ENCODE measurements at regions of chr13 and their contacts with region 1.

Region 1: GRCh38 chr13:44435142-44435982 is 61.7 kb downstream of the SERP2 start:
- DNase-seq: peak; percentile 87 to 90
- H3K4me3 ChIP-seq: peak overlapping the region; percentile 86
- H3K27ac ChIP-seq: peak overlapping the region; percentile 93
- H3K4me1 ChIP-seq: peaks cover 33% of the 10 kb centered on the region
- H3K27me3 ChIP-seq: no peaks in the 10 kb centered on the region
- CTCF ChIP-seq: no peak

Region 2: GRCh38 chr13:43831088-43831487 is 604.3 kb before region 1 on chr13:
- CTCF ChIA-PET with region 1: no interaction called
- POLR2A ChIA-PET with region 1: no interaction called
- intact Hi-C with region 1: no loop called
- DNase-seq: no peak
- H3K4me3 ChIP-seq: no peak overlapping the region
- H3K27ac ChIP-seq: peak overlapping the region; percentile 67
- H3K4me1 ChIP-seq: peaks cover 12% of the 10 kb centered on the region; the same call in 1 of the 2 replicates
- H3K27me3 ChIP-seq: no peaks in the 10 kb centered on the region
- CTCF ChIP-seq: no peak

Region 3: DNA sequence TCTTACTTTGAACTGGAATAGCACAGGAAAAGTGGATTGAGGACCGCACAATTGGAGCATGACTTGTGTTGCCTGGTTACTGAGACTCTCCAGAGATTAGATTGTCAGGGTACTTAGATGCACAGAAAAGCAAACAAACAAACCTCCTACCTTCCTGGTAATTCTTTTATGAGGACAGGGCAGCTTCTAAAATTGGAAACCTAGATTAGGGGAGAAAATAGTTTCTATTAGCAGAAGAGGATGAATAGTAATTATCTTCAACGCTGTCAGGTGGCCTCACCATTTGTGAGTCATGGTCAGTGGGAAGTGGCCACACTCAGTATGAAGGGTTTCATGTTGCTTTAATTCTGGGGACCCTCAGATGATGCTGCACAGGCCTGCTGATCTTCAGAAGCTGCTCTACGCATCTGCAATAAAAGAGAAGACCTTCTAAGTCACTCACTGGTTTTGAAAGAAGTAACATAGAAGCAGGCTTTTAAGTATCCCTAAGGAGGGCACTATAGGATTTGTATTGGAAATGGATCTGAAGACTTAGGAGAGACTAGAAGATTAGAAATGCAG is 448.9 kb before region 1 on chr13:
- CTCF ChIA-PET with region 1: no interaction called
- POLR2A ChIA-PET with region 1: interaction called, 5 read pairs
- intact Hi-C with region 1: loop called (anchors 5 kb)
- DNase-seq: no peak
- H3K4me3 ChIP-seq: no peak overlapping the region
- H3K27ac ChIP-seq: no peak overlapping the region
- H3K4me1 ChIP-seq: peaks cover under 1% of the 10 kb centered on the region; the same call in 1 of the 2 replicates
- H3K27me3 ChIP-seq: no peaks in the 10 kb centered on the region
- CTCF ChIP-seq: no peak

Region 4: DNA sequence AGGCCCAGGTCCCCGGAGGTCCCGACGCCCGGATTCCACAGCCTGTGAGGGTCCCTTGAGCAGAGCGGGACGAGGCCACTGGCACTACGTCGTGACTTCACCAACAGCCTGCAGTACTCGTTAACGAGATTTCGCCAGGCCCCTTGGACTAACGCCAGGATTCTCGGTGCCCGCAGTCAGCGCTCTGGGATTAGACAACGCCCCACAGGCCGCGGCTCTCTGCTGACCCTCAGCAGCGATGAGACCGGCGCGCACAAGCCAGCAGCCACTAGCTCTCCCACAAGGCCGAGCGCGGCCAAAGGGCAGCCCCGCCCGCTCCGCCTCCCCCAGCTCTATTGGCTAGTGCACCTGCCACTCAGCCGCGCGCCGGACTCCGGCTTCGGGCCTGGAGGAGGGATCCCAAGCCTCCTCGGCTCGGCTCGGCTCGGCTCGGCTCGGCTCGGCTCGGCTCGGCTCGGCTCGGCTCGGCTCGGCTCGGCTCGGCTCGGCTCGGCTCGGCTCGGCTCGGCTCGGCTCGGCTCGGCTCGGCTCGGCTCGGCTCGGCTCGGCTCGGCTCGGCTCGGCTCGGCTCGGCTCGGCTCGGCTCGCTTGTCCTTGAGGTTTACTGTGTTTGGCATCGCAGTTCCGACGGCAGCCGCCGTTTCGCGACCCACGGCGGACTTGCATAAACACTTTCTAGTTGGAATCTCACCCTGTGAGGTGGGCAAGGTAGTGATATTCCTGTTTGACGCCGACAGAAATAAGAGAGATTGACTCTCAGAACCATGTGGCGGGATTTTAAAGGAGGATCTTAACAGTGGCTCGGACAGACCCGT is 293.4 kb before region 1 on chr13:
- CTCF ChIA-PET with region 1: interaction called, 5 read pairs
- POLR2A ChIA-PET with region 1: interaction called, 13 read pairs
- intact Hi-C with region 1: loop called (anchors 1 kb)
- DNase-seq: peak; percentile 91 to 99
- H3K4me3 ChIP-seq: peak overlapping the region; percentile 63
- H3K27ac ChIP-seq: peak overlapping the region; percentile 97
- H3K4me1 ChIP-seq: peaks cover 20% of the 10 kb centered on the region
- H3K27me3 ChIP-seq: no peaks in the 10 kb centered on the region
- CTCF ChIP-seq: no peak

Region 5: GRCh38 chr13:44300895-44301638 is 134.3 kb before region 1 on chr13:
- CTCF ChIA-PET with region 1: interaction called, 10 read pairs
- POLR2A ChIA-PET with region 1: interaction called, 18 read pairs
- intact Hi-C with region 1: no loop called
- DNase-seq: peak; percentile 56 to 70
- H3K4me3 ChIP-seq: no peak overlapping the region
- H3K27ac ChIP-seq: peak overlapping the region; percentile 85
- H3K4me1 ChIP-seq: peaks cover 45% of the 10 kb centered on the region
- H3K27me3 ChIP-seq: no peaks in the 10 kb centered on the region
- CTCF ChIP-seq: no peak

Region 6: GRCh38 chr13:44394658-44395057 is 40.7 kb before region 1 on chr13:
- CTCF ChIA-PET with region 1: interaction called, 16 read pairs
- POLR2A ChIA-PET with region 1: no interaction called
- intact Hi-C with region 1: no loop called
- DNase-seq: no peak
- H3K4me3 ChIP-seq: no peak overlapping the region
- H3K27ac ChIP-seq: no peak overlapping the region
- H3K4me1 ChIP-seq: no peaks in the 10 kb centered on the region
- H3K27me3 ChIP-seq: no peaks in the 10 kb centered on the region
- CTCF ChIP-seq: no peak

Region 7: GRCh38 chr13:44484562-44485138 is 49.3 kb after region 1 on chr13:
- CTCF ChIA-PET with region 1: no interaction called
- POLR2A ChIA-PET with region 1: interaction called, 11 read pairs
- intact Hi-C with region 1: no loop called
- DNase-seq: no peak
- H3K4me3 ChIP-seq: no peak overlapping the region
- H3K27ac ChIP-seq: peak overlapping the region; percentile 28; the same call in 1 of the 2 replicates
- H3K4me1 ChIP-seq: peaks cover 3% of the 10 kb centered on the region; the same call in 1 of the 2 replicates
- H3K27me3 ChIP-seq: no peaks in the 10 kb centered on the region
- CTCF ChIP-seq: no peak

Measured in PC-9 (cell line).